Naive thymus-derived CD4-positive, alpha-beta T cell (primary cell): ENCODE measurements at regions of chr6 and their contacts with region 1.

Region 1: GRCh38 chr6:125099211-125100073 is 54.1 kb upstream of the TPD52L1 start:
- DNase-seq: peak in 8 of 9 donors; percentile 15 to 37 (median 26)
- ATAC-seq: peak; percentile 83
- H3K4me3 ChIP-seq: peak overlapping the region; percentile 31
- H3K4me3 Mint-ChIP-seq: peak overlapping the region; percentile 66 to 88 (median 79)
- H3K27ac ChIP-seq: no peak overlapping the region
- H3K27ac Mint-ChIP-seq: peak overlapping the region in 3 of 9 donors; percentile 16 to 83 (median 39)
- H3K4me1 ChIP-seq: no peaks in the 10 kb centered on the region
- H3K4me1 Mint-ChIP-seq: peaks cover 6 to 43% (median 30%) of the 10 kb centered on the region in 7 donors
- H3K27me3 ChIP-seq: peaks cover 0 to 2% of the 10 kb centered on the region in 2 donors
- H3K27me3 Mint-ChIP-seq: peaks cover 3 to 35% (median 7%) of the 10 kb centered on the region in 5 donors

Region 2: DNA sequence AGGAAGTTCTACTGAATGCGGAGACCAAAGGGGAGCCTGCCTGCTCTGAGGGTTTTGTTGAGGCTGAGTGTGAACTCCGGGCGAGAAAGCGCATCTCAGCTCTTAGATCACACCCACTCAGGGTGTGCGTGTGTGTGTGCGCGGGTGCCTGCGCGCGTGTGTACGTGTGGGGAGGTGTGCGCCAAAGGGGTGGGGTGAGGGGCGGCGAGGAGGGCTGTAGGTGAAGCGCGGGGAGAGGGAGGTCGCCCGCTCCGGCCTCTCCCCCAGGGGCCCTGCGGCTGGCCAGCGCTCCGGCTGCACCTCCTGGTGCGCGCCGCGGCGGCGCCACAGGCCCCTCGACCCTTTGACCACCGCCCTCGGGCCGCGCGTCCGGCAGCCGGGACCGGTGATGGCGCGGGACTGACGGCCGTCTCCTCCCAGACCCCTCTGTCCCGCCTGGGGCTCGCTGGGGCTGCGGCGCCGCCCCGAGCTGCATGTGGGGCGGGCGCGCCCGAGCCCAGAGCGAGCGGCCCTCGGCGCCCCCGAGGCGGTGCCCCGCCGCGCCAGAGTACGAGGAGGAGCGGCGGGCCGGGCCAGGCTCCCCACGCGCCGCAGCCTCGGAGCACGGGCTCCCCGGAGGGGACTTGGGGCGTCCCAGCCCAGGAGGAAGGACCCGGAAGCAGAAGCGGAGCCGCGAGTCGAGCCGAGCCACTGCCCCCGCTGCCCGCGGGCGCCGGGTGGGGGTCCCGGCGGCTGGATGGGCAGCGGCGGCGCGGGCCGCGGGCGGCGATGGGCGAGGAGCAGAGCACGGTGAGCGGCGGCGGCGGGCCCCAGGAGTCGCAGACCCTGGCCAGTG is 137.4 kb before region 1 on chr6 and contains the start of gene RNF217:
- CTCF ChIA-PET with region 1: no interaction called
- POLR2A ChIA-PET with region 1: no interaction called
- intact Hi-C with region 1: loop called in 1 of 2 experiments (anchors 10 kb)
- DNase-seq: peak in 5 of 9 donors; percentile 8 to 48 (median 16)
- ATAC-seq: peak; percentile 63
- H3K4me3 ChIP-seq: no peak within 1 kb of the TSS
- H3K4me3 Mint-ChIP-seq: peak within 1 kb of the TSS; percentile 72 to 89 (median 81)
- H3K27ac ChIP-seq: no peak within 1 kb of the TSS
- H3K27ac Mint-ChIP-seq: peak within 1 kb of the TSS in 3 of 9 donors; percentile 16 to 60 (median 45)
- H3K4me1 ChIP-seq: no peaks in the 10 kb centered on the region
- H3K4me1 Mint-ChIP-seq: peaks cover 15 to 31% (median 25%) of the 10 kb centered on the region in 7 donors
- H3K27me3 ChIP-seq: no peaks in the 10 kb centered on the region
- H3K27me3 Mint-ChIP-seq: peaks cover 54 to 79% (median 61%) of the 10 kb centered on the region in 5 donors
- total RNA-seq, gene RNF217: 0.89 to 3.6 (median 1.9) TPM

Region 3: GRCh38 chr6:125001684-125002405 is 97.6 kb before region 1 on chr6:
- CTCF ChIA-PET with region 1: no interaction called
- POLR2A ChIA-PET with region 1: no interaction called
- intact Hi-C with region 1: no loop called
- DNase-seq: no peak
- ATAC-seq: no peak
- H3K4me3 ChIP-seq: no peak overlapping the region
- H3K4me3 Mint-ChIP-seq: no peak overlapping the region
- H3K27ac ChIP-seq: no peak overlapping the region
- H3K27ac Mint-ChIP-seq: no peak overlapping the region
- H3K4me1 ChIP-seq: no peaks in the 10 kb centered on the region
- H3K4me1 Mint-ChIP-seq: no peaks in the 10 kb centered on the region
- H3K27me3 ChIP-seq: no peaks in the 10 kb centered on the region
- H3K27me3 Mint-ChIP-seq: peaks cover 0 to 6% (median 0%) of the 10 kb centered on the region in 5 donors

Region 4: DNA sequence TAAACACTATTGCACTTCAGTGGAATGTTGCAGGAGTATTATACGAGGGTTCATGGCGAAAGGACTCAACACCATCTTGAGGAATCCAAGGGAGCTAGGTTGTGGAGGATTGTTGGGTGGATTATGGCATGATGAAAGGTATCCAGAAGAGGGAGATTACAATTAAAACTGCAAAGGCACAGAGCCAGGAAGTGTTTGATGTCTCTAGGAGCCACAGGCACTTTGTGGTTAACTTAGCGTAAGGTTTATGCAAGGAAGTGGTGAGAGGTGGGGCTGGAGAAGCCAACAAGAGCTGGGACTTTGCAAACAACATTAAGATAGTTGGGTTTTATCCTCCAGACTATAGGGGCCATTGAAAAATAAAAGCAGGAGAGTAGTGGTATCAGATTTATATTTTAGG is 32.5 kb before region 1 on chr6:
- CTCF ChIA-PET with region 1: no interaction called
- POLR2A ChIA-PET with region 1: no interaction called
- intact Hi-C with region 1: loop called in 1 of 2 experiments (anchors 2 kb)
- DNase-seq: peak in 8 of 9 donors; percentile 13 to 77 (median 58)
- ATAC-seq: peak; percentile 89
- H3K4me3 ChIP-seq: no peak overlapping the region
- H3K4me3 Mint-ChIP-seq: no peak overlapping the region
- H3K27ac ChIP-seq: no peak overlapping the region
- H3K27ac Mint-ChIP-seq: no peak overlapping the region
- H3K4me1 ChIP-seq: peaks cover 0 to 36% of the 10 kb centered on the region in 2 donors
- H3K4me1 Mint-ChIP-seq: peaks cover 0 to 6% (median 0%) of the 10 kb centered on the region in 7 donors
- H3K27me3 ChIP-seq: no peaks in the 10 kb centered on the region
- H3K27me3 Mint-ChIP-seq: peaks cover 0 to 10% (median 0%) of the 10 kb centered on the region in 5 donors